Astrocyte of the cerebellum (primary cell): ENCODE measurements at regions of chr9 and their contacts with region 1.

Region 1: GRCh38 chr9:92564982-92565381 is 29.2 kb upstream of the ECM2 start:
- DNase-seq: no peak
- H3K4me3 ChIP-seq: no peak overlapping the region
- CTCF ChIP-seq: no peak

Region 2: DNA sequence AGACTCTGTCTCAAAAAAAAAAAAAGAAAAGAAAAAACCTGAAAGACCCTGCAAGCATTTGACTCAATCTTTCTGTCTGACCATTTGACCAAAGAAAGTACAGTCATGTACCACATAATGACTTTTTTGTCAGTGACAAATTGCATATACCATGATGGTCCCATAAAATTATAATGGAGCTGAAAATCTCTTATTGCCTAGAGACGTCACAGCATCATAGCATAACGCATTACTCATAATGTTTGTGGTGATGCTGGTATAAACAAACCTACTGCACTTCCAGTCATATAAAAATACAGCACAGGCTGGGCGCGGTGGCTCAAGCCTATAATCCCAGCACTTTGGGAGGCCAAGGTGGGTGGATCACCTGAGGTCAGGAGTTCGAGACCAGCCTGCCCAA is 39.7 kb before region 1 on chr9:
- in situ Hi-C with region 1: loop called (anchors 5 kb)
- DNase-seq: peak; percentile 37
- H3K4me3 ChIP-seq: no peak overlapping the region
- CTCF ChIP-seq: no peak